ENCODE measurements at regions of chr1 and their contacts with region 1.

Region 1: GRCh38 chr1:24391882-24392603 is 21.5 kb downstream of the STPG1 start:
- DNase-seq: peak; percentile 59 to 63
- ATAC-seq: peak; percentile 85 to 91
- H3K4me3 ChIP-seq: no peak overlapping the region
- H3K27ac ChIP-seq: peak overlapping the region; percentile 56 to 81; a peak in 5 of 6 replicates
- H3K4me1 ChIP-seq: peaks cover 55% of the 10 kb centered on the region
- CTCF ChIP-seq: peak; percentile 76
- EP300 ChIP-seq: no peak
- POLR2A ChIP-seq: no peak
- RAD21 ChIP-seq: peak; percentile 85 to 89

Region 2: DNA sequence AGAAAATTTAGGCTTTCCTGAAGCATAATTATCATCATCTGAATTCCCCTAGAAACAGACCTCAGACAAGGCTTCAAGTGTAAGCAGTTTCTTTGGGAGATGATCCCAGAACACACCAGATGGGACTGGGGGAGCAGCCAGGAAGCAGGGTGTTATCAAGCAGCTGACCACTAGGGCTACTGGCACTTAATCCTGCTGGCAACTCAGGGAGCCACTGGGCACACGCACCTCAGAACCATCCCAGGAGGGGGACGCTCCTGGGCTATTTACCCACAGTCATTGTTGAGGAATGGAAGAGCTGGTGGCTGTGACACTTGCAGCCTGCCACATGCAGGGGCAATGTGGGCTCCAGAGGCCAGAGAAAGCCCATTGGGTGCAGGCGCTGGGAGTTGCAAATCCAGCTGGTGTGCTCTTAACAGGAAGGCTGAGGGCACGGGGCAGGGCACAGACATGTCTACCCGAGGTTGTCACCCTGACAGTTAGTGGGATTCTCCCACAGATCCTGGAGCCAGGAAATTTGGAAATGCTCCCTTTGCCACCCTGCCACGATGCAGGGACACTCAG is 234.0 kb before region 1 on chr1:
- CTCF ChIA-PET with region 1: interaction called, 88 read pairs
- POLR2A ChIA-PET with region 1: no interaction called
- DNase-seq: peak; percentile 28 to 37
- ATAC-seq: peak; percentile 85 to 92
- H3K4me3 ChIP-seq: no peak overlapping the region
- H3K27ac ChIP-seq: no peak overlapping the region
- H3K4me1 ChIP-seq: no peaks in the 10 kb centered on the region
- CTCF ChIP-seq: no peak
- EP300 ChIP-seq: no peak
- POLR2A ChIP-seq: no peak
- RAD21 ChIP-seq: no peak

Region 3: DNA sequence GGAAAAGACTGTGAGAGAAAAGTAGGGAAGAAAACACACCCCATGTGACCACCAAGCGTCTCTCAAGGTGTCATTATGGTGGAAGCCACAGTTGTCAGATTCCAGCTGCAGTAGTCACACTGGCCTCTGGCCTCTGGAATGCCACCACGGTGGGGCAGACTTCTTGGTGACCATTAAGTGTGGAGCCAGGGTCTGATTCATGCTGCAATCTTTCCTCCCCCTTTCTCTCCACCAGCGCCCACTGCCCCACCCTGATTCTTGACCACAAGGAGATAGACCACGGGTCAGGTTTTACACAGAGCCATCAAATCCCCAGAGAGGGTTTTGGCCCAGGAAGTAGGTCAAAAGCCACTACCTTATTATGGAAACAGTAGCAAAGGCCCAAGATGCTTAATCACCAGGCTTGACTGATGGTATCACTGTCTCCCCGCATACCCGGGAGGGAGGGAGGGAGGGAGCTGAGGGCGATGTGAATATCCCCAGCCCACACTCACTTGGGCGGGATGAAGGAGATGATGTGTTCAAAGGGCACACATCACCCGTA is 125.6 kb before region 1 on chr1:
- CTCF ChIA-PET with region 1: interaction called, 14 read pairs
- POLR2A ChIA-PET with region 1: no interaction called
- DNase-seq: peak; percentile 60 to 88
- ATAC-seq: peak; percentile 92
- H3K4me3 ChIP-seq: no peak overlapping the region
- H3K27ac ChIP-seq: peak overlapping the region; percentile 19 to 70; a peak in 5 of 6 replicates
- H3K4me1 ChIP-seq: peaks cover 15% of the 10 kb centered on the region
- CTCF ChIP-seq: no peak
- EP300 ChIP-seq: peak in 1 of 2 experiments; percentile 29; a peak in 1 of 5 replicates
- POLR2A ChIP-seq: no peak
- RAD21 ChIP-seq: peak; percentile 22 to 30; a peak in 2 of 5 replicates

Region 4: GRCh38 chr1:24295535-24295934 is 96.5 kb before region 1 on chr1:
- CTCF ChIA-PET with region 1: interaction called, 14 read pairs
- POLR2A ChIA-PET with region 1: interaction called, 3 read pairs
- DNase-seq: no peak
- ATAC-seq: no peak
- H3K4me3 ChIP-seq: no peak overlapping the region
- H3K27ac ChIP-seq: peak overlapping the region; percentile 93 to 98
- H3K4me1 ChIP-seq: peaks cover 55% of the 10 kb centered on the region
- CTCF ChIP-seq: no peak
- EP300 ChIP-seq: no peak
- POLR2A ChIP-seq: no peak
- RAD21 ChIP-seq: no peak

Region 5: DNA sequence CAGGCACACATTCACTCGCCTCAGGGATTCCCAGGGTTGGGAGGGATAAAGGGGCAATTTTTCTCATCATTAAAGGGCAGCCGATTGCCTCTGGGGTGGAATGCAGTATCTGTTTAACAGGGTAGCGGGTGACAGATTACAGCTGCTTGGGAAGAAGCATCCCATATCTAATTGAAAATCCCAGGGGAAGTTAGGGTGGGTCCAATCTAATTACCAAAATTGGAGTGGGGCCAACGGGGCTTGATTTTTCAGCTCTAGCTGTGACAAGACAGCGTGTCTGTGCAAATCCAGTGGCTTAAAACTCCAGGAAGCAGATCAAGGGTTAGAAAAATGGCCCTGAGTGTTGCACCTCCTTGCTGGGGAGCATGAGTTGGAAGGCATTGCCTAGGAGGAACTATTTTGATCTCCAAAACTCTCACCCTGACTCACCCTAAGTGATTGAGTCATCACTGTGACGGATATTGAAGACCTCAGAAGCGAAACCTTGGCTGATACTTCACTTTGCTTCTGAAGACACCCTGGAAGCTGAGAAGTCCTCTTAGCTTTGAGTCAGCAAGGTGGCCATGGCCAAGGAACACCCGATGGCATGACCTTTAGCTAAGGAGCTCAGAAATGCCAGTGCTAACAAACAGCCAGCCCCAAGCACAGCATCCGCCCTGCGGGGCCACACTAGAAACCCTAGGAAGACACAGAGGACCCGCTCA is 26.9 kb before region 1 on chr1:
- CTCF ChIA-PET with region 1: interaction called, 44 read pairs
- POLR2A ChIA-PET with region 1: no interaction called
- DNase-seq: peak; percentile 83 to 85
- ATAC-seq: peak; percentile 83 to 90
- H3K4me3 ChIP-seq: no peak overlapping the region
- H3K27ac ChIP-seq: peak overlapping the region; percentile 71 to 86
- H3K4me1 ChIP-seq: peaks cover 40% of the 10 kb centered on the region
- CTCF ChIP-seq: no peak
- EP300 ChIP-seq: no peak
- POLR2A ChIP-seq: no peak
- RAD21 ChIP-seq: 0 out of 5 replicates have a peak, but pooled peaks of 1 of the 2 experiments have one; percentile 13

Region 6: GRCh38 chr1:24635195-24635843 is 243.3 kb after region 1 on chr1:
- CTCF ChIA-PET with region 1: interaction called, 11 read pairs
- POLR2A ChIA-PET with region 1: no interaction called
- DNase-seq: peak; percentile 60 to 76
- ATAC-seq: peak; percentile 77 to 91; a peak in 5 of 6 replicates
- H3K4me3 ChIP-seq: no peak overlapping the region
- H3K27ac ChIP-seq: no peak overlapping the region
- H3K4me1 ChIP-seq: peaks cover 4% of the 10 kb centered on the region; the same call in 1 of the 3 replicates
- CTCF ChIP-seq: peak; percentile 69
- EP300 ChIP-seq: no peak
- POLR2A ChIP-seq: no peak
- RAD21 ChIP-seq: peak; percentile 74 to 81

Region 7: DNA sequence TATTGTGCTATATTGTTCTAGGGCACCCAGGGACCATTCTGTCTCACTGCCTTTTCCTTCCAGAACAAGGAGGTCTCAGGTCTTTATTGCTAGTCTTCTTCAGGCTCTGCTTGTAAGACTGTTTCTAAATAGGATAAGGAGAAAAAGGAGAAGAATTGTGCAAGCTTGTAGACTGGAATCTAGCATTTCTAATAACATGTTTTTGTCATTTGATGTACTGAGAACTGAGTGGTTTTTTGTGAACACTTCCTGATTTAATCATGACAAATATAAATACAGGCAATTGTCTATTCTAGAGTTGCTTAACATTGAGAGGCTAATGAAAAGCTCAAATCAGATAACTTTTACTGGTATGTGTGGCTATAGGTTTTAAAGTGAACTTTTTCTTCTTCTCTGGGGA is 430.8 kb after region 1 on chr1:
- CTCF ChIA-PET with region 1: no interaction called
- POLR2A ChIA-PET with region 1: no interaction called
- DNase-seq: no peak
- ATAC-seq: no peak
- H3K4me3 ChIP-seq: no peak overlapping the region
- H3K27ac ChIP-seq: no peak overlapping the region
- H3K4me1 ChIP-seq: peaks cover 38% of the 10 kb centered on the region
- CTCF ChIP-seq: no peak
- EP300 ChIP-seq: no peak
- POLR2A ChIP-seq: no peak
- RAD21 ChIP-seq: no peak